Dorsolateral prefrontal cortex (tissue), 120 donors: ENCODE measurements at regions of chr11 and their contacts with region 1.

Region 1: DNA sequence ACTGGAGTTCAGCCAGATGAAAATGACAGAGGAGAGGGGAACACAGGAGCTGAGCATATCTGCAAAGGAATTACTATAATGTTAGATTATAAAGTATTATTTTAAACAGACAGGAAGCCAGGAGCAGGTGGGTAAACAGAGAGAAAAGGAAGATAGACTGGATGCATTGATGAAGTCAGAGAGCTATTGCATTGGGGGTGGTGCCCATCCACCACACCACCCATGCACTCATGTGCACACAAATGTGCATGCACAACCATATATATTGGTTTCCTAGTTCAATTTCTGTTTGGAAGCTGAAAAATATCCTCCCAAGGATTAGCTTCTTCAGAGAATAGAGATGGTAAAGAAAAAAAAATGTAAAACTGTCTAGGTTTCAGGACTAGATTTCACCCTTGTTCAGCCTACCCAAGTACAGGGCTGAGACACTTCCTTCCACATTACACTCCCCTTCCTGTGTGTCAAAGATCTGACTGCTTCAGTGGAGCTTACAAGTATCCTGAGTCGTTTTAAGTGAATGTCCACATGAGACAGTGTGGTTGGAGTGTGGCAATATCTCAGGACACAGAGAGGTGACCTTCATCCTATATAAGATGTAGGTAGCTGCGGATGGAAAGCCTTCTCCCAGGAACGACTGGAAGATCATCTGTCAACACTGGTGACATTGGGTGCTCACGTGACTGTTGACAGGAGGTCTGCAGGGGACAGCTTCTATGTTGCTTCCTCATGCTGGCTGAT is 12.2 kb upstream of the SMPD1 start:
- DNase-seq: no peak
- H3K4me3 ChIP-seq: no peak overlapping the region
- H3K27ac ChIP-seq: no peak overlapping the region
- H3K27me3 ChIP-seq: no peaks in the 10 kb centered on the region
- CTCF ChIP-seq: no peak

Region 2: DNA sequence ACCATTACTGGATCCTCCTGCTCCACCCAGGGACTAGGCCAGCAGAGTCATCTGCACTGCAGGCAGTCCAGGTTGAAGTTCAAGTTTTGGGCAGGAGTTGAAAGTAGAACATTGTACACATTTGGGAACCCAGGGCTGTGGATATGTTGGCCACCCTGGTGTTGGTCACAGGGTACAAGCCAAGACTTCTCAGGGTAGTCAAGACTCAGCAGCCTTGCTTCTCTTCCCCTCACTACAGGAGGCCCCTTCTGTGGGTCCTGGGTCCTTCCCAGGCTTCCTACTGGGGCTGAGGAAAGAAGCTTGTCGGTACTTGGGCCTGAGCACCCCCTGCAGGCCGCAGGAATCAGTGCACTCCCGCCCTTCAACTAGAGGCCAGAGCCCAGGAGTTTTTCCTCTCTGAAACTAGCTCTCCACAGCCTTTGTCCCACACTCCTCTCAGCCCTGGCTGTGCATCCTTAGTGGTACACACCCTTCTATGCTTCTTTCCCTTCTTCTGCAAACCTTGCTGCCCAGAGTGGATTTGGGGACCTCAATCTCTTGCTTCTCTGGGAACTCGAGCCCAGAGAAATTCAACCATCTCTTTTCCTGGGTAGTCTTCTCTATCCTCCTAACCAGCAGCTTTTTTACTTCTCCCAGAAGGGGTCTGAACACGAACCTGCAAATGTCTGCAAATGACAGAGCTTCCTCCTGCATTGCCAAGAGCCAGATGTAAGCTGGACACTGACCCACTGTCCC is 65.4 kb after region 1 on chr11:
- intact Hi-C with region 1: loop called (anchors 1 to 2 kb)
- DNase-seq: peak; percentile 55 to 83 (median 68)
- H3K4me3 ChIP-seq: no peak overlapping the region
- H3K27ac ChIP-seq: peak overlapping the region in 10 of 59 donors; percentile 0 to 66 (median 21)
- H3K27me3 ChIP-seq: no peaks in the 10 kb centered on the region
- CTCF ChIP-seq: peak; percentile 68 to 96 (median 90)